ENCODE measurements at regions of chr2 and their contacts with region 1.

Region 1: GRCh38 chr2:131673392-131674173 is 145.9 kb downstream of the CCDC74A start:
- DNase-seq: peak; percentile 75 to 83
- ATAC-seq: peak; percentile 95

Region 2: GRCh38 chr2:131509615-131510014 is 164.0 kb before region 1 on chr2:
- intact Hi-C with region 1: no loop called
- DNase-seq: no peak
- ATAC-seq: no peak

Region 3: GRCh38 chr2:131801210-131801744 is 127.7 kb after region 1 on chr2:
- intact Hi-C with region 1: loop called in 1 of 2 experiments (anchors 10 kb)
- DNase-seq: peak in 1 of 2 donors; percentile 9
- ATAC-seq: peak; percentile 33

Measured in left colon (tissue), 2 donors.